ENCODE measurements at regions of chr10 and their contacts with region 1.

Region 1: GRCh38 chr10:132223156-132223590 is 36.4 kb downstream of the DPYSL4 start:
- DNase-seq: peak; percentile 94

Region 2: DNA sequence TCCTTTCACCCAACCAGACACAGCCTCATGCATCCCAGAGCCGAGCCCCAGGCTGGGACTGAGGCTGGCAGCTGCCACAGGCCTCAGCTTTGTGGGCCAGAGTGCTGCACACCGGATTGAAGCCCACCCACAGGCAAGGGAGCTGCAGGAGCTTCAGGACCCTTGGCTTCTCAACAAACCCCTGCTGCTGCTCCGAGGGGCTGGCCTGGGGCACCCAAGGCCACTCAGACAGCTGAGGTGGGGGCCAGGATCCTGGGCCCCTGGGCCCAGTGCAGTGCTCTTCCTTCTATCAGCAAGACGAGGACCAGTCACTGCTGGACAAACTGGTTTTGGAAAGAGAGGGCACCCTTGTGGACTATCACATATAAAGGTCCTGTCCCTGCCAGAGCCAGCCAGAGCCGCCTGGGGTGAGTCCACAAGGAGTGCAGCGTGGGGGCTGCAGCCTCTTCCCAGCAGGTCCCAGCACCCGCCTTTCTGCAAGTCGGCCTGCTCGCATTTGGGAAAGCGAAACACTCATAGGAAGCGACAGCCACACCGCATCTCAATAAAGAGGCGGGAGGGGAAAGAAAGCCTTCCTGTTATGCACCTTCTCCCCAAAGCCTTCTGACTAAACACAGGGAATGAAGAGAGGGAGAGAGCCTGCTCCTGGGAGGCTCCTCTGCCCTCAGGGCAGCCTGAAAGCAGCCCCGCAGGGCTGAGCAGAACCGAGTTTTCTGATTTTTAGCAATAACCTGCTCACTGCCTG is 902.1 kb before region 1 on chr10:
- intact Hi-C with region 1: no loop called
- DNase-seq: peak; percentile 73

Region 3: GRCh38 chr10:132096223-132096622 is 127.0 kb before region 1 on chr10:
- intact Hi-C with region 1: no loop called
- DNase-seq: peak; percentile 66

Region 4: GRCh38 chr10:132354356-132355094 is 131.4 kb after region 1 on chr10:
- intact Hi-C with region 1: loop called (anchors 2 to 5 kb)
- DNase-seq: peak; percentile 74

Region 5: GRCh38 chr10:132910901-132911785 is 688.0 kb after region 1 on chr10:
- intact Hi-C with region 1: no loop called
- DNase-seq: peak; percentile 74

Measured in posterior vena cava (tissue), 2 donors.